CD4-positive, alpha-beta memory T cell (primary cell): ENCODE measurements at regions of chr3 and their contacts with region 1.

Region 1: DNA sequence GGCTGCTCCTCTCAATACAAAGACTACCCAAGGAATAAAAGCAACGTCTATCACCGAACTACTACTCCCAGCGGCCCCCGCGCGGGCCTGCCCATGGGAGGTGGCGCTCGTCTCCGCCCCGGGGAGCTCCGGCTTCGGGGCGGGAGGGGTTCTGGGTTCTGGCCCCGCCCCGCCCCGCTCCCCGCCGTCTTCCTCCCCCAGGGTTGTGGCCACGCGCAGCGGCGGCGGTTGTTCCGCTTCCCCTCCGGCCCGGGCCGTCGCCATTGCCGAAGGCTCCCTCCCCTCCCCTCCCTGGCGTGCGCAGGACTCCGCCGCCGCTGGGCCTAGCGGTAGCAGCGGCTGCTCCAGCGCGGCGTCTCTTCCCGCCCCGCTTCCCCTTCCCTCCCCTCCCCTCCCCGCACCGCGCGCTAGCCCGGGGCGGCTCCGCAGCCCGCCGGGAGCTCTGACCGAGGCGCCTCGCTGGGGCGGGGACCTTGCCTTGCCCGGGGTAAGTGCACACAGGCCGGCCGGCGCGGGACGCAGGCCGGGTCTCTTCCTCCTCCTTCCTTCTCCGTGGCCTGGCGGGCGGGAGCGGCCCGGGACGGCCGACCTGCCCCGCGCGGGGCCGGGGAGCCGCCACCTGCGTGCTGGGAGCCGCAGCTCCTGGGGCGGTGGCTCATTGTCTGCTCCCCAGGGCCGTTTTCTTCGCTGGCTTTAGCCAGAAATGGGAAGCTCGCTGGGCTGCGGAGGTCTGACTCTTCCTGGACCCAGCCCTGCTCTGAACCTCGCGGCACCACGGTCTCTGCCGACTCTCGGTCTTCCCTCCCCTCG is at the start of gene PAK2:
- DNase-seq: peak; percentile 85 to 90 (median 87)
- H3K4me3 ChIP-seq: peak within 1 kb of the TSS; percentile 70 to 95
- H3K4me3 Mint-ChIP-seq: peak within 1 kb of the TSS; percentile 96 to 100 (median 100)
- H3K27ac ChIP-seq: peak within 1 kb of the TSS; percentile 99
- H3K27ac Mint-ChIP-seq: peak within 1 kb of the TSS; percentile 97 to 100 (median 99)
- H3K4me1 ChIP-seq: peaks cover 42% of the 10 kb centered on the region
- H3K4me1 Mint-ChIP-seq: peaks cover 21 to 45% (median 28%) of the 10 kb centered on the region in 4 donors
- H3K27me3 ChIP-seq: no peaks in the 10 kb centered on the region
- H3K27me3 Mint-ChIP-seq: no peaks in the 10 kb centered on the region
- total RNA-seq, gene PAK2: 80.4 to 97.4 TPM

Region 2: DNA sequence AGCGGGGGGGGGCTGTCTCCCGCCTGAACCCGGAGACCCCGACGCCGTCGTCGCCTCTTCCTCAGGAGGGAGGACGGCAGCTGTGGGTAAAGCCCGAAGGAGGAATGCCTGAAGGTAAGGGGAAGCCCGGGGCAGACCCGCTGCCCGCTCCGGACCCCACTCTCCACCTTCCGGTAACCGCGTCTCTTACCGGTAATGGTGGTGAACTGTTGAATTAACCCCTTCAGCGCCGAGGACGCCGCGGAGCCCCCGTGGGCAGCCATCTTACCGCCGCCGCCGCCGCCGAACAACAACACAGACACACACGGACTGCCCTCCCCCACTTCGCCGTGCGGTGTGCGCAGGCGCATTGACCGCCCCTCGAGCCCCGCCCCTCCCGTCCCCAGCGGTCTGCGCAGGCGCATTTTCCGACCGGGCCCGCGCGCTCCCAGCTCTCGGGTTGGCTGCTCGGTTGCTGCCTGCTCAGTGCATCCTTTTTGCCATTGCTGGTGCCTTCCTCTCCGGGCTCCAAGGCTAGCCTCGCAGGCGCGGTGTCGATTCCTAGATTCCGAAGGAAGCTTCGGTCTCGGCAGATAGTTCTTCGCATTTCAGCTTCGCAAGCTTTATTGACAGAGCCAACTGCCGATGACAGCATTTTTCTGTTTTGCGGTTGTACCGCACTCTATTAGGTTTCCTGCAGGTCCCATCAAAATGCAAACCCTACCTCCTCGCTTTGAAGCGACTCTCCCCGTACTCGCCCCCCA is 307.6 kb before region 1 on chr3 and contains the start of gene UBXN7:
- CTCF ChIA-PET with region 1: no interaction called
- POLR2A ChIA-PET with region 1: no interaction called
- intact Hi-C with region 1: loop called (anchors 1 kb)
- DNase-seq: peak; percentile 92 to 96 (median 95)
- H3K4me3 ChIP-seq: peak within 1 kb of the TSS; percentile 64 to 95
- H3K4me3 Mint-ChIP-seq: peak within 1 kb of the TSS; percentile 70 to 97 (median 85)
- H3K27ac ChIP-seq: peak within 1 kb of the TSS; percentile 81
- H3K27ac Mint-ChIP-seq: peak within 1 kb of the TSS; percentile 80 to 97 (median 96)
- H3K4me1 ChIP-seq: peaks cover 22% of the 10 kb centered on the region
- H3K4me1 Mint-ChIP-seq: peaks cover 8 to 35% (median 15%) of the 10 kb centered on the region in 4 donors
- H3K27me3 ChIP-seq: no peaks in the 10 kb centered on the region
- H3K27me3 Mint-ChIP-seq: no peaks in the 10 kb centered on the region
- total RNA-seq, gene UBXN7: 72.6 to 90.8 TPM

Region 3: GRCh38 chr3:196711838-196712513 is 27.9 kb before region 1 on chr3 and contains the starts of genes CEP19 and PIGX:
- CTCF ChIA-PET with region 1: interaction called, 5 read pairs
- POLR2A ChIA-PET with region 1: interaction called, 59 read pairs
- intact Hi-C with region 1: loop called (anchors 1 kb)
- DNase-seq: peak; percentile 93 to 98 (median 96)
- H3K4me3 ChIP-seq: peak within 1 kb of the TSS; percentile 68 to 87
- H3K4me3 Mint-ChIP-seq: peak within 1 kb of the TSS; percentile 85 to 98 (median 96)
- H3K27ac ChIP-seq: peak within 1 kb of the TSS; percentile 99
- H3K27ac Mint-ChIP-seq: peak within 1 kb of the TSS; percentile 93 to 100 (median 99)
- H3K4me1 ChIP-seq: peaks cover 21% of the 10 kb centered on the region
- H3K4me1 Mint-ChIP-seq: peaks cover 12 to 33% (median 24%) of the 10 kb centered on the region in 4 donors
- H3K27me3 ChIP-seq: no peaks in the 10 kb centered on the region
- H3K27me3 Mint-ChIP-seq: no peaks in the 10 kb centered on the region
- total RNA-seq, gene CEP19: 7.8 to 8.2 TPM
- total RNA-seq, gene PIGX: 19.1 to 23.7 TPM

Region 4: DNA sequence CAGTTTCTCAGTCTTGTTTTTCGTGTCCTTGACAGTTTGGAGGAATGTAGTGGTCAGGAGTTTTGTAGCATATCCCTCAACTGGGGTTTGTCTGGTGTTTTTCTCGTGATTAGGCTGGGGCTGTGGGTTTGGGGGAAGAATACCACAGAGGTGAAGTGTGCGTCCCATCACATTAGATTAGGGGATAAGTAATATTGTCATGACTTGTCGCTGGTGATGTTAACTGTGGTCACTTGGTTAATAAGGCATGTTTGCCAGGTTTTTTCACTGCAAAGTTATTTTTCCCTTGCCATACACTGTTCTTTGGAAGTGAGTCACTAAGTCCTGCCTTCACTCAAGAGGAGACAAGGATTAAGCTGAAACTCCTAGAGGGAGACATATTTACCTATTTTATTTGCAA is 38.9 kb after region 1 on chr3:
- CTCF ChIA-PET with region 1: no interaction called
- POLR2A ChIA-PET with region 1: interaction called, 4 read pairs
- intact Hi-C with region 1: loop called (anchors 5 kb)
- DNase-seq: no peak
- H3K4me3 ChIP-seq: no peak overlapping the region
- H3K4me3 Mint-ChIP-seq: peak overlapping the region in 1 of 8 donors; percentile 41
- H3K27ac ChIP-seq: no peak overlapping the region
- H3K27ac Mint-ChIP-seq: peak overlapping the region in 5 of 7 donors; percentile 25 to 84 (median 45)
- H3K4me1 ChIP-seq: peaks cover 41% of the 10 kb centered on the region
- H3K4me1 Mint-ChIP-seq: peaks cover 43 to 69% (median 57%) of the 10 kb centered on the region in 4 donors
- H3K27me3 ChIP-seq: no peaks in the 10 kb centered on the region
- H3K27me3 Mint-ChIP-seq: no peaks in the 10 kb centered on the region

Region 5: GRCh38 chr3:196867507-196868296 is 127.8 kb after region 1 on chr3 and contains the start of gene SENP5:
- CTCF ChIA-PET with region 1: no interaction called
- POLR2A ChIA-PET with region 1: interaction called, 11 read pairs
- intact Hi-C with region 1: loop called (anchors 1 kb)
- DNase-seq: peak; percentile 84 to 88 (median 87)
- H3K4me3 ChIP-seq: peak within 1 kb of the TSS; percentile 48 to 73
- H3K4me3 Mint-ChIP-seq: peak within 1 kb of the TSS; percentile 95 to 98 (median 96)
- H3K27ac ChIP-seq: peak within 1 kb of the TSS; percentile 85
- H3K27ac Mint-ChIP-seq: peak within 1 kb of the TSS; percentile 90 to 98 (median 98)
- H3K4me1 ChIP-seq: peaks cover 27% of the 10 kb centered on the region
- H3K4me1 Mint-ChIP-seq: peaks cover 18 to 38% (median 29%) of the 10 kb centered on the region in 4 donors
- H3K27me3 ChIP-seq: no peaks in the 10 kb centered on the region
- H3K27me3 Mint-ChIP-seq: no peaks in the 10 kb centered on the region
- total RNA-seq, gene SENP5: 44.3 to 45.5 TPM